OCI-LY7 (cell line): ENCODE measurements at regions of chr2 and their contacts with region 1.

Region 1: DNA sequence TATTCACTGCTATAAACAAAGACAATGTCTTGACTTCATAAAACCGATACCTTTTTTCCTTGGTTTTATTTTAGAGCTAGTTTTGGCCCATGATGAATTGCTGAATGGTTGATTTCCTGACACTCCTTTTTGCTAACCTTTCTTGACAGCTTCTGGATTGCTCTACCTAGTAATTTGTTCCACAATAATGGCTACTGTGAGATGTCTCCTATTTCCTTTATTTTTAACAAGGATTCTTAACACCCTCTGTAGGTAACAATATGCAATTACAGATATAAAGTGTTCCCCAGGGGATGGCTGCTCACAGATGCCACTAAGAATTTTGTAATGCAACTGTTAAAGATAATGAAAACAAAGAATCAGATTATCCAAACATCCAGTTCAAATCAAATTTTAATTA is 100.8 kb upstream of the ATP5MC3 start:
- DNase-seq: peak; percentile 46
- H3K4me3 ChIP-seq: no peak overlapping the region
- H3K27ac ChIP-seq: no peak overlapping the region
- H3K4me1 ChIP-seq: no peaks in the 10 kb centered on the region
- CTCF ChIP-seq: peak; percentile 78

Region 2: GRCh38 chr2:174561283-174561971 is 720.9 kb before region 1 on chr2:
- CTCF ChIA-PET with region 1: no interaction called
- POLR2A ChIA-PET with region 1: no interaction called
- intact Hi-C with region 1: no loop called
- DNase-seq: no peak
- H3K4me3 ChIP-seq: no peak overlapping the region
- H3K27ac ChIP-seq: no peak overlapping the region
- H3K4me1 ChIP-seq: no peaks in the 10 kb centered on the region
- CTCF ChIP-seq: no peak

Region 3: DNA sequence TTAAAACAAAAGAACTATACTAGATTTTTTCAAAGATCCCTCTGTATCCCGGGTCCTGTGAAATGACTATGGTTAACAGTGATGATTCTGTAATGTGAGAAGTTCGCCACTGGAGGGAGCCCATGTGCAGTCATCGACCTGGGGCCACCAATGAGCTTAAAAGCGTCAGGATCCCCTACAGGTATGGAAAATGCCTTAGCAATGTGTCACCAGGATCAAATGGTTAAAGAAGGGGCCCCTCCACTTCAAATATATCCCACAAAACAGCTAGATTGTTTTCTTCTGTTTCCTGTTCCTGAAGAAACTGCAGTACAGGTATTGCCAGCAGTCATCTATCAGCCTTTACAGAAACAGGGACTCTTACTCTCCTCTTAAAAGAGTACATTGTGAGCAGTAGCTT is 533.3 kb before region 1 on chr2:
- CTCF ChIA-PET with region 1: no interaction called
- POLR2A ChIA-PET with region 1: no interaction called
- intact Hi-C with region 1: loop called (anchors 10 kb)
- DNase-seq: peak; percentile 64
- H3K4me3 ChIP-seq: no peak overlapping the region
- H3K27ac ChIP-seq: no peak overlapping the region
- H3K4me1 ChIP-seq: peaks cover 8% of the 10 kb centered on the region
- CTCF ChIP-seq: peak; percentile 92

Region 4: DNA sequence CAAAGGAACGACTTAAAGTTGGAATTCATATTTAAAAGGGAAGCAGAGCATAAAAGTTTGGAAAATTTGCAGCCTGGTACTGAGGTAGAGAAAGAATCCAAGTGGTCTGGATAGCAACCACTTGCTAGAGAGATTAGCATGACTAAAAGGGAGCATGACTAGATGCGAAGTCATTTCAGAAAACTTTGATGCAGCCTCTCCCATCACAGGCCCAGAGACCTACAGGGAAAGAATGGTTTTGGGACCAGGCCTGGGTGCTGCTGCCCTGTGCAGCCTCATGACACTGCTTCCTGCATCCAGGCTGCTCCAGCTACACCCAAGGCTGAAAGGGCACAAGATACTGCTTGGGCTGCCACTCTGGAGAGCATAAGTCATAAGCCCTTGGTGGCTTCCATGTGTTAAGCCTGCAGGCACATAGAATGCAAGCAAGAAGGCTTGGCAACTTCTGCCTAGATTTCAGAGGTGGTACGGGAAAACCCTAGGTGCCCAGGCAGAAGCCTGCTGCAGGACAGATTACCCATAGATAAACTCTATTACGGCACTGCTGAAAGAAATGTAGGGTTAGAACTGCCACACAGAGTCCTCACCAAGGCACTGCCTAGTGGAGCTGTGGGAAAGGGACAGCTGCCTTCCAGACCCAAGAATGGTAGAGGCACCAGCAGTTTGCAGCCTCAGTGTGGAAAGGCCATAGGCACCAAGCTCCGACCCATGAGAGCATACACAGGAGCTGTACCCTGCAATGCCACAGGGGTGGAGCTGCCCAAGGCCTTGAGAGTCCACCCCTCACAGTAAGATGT is 264.5 kb before region 1 on chr2:
- CTCF ChIA-PET with region 1: no interaction called
- POLR2A ChIA-PET with region 1: no interaction called
- intact Hi-C with region 1: no loop called
- DNase-seq: no peak
- H3K4me3 ChIP-seq: no peak overlapping the region
- H3K27ac ChIP-seq: no peak overlapping the region
- H3K4me1 ChIP-seq: no peaks in the 10 kb centered on the region
- CTCF ChIP-seq: no peak

Region 5: DNA sequence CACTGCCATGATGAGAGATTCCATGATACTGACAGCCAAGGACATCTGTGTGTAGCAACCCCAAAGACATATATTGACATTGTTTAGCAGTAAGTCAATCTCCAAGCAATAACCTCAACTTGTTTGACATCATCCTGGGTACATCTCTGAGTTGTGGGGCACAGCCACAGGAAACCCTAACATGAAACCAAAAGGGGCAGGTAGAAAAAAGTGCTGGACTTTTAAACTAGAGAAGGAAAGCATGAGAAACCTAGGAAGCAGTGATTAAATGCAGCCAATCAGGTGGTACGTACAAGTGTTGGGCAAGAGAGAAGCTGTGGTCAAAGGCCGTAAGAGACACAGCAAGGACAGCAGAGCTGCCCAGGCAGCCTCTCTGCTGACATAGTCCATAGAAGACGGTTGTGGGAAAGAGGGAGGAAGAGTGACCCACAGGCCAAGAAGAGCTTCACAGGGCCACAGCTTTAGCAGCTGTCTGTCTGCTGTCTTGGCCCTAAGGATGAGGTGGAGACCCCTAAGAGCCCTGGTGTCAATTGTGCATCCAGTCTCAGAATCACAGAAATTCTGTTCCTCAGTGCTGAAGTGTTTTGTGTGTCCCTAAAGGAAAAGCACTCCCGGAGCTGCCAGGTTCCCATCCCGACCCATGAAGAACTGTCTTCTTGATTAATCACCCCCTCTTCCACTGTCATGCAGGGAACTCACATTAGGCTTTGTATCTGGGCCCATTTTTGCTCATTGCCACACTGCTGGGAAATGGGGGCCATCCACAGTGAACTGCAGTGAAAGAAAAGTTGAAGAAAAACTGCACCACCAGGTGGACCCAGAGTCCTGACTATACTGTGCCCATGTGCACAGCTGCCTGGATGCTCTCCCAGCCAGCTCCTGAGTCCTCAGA is 251.7 kb before region 1 on chr2:
- CTCF ChIA-PET with region 1: no interaction called
- POLR2A ChIA-PET with region 1: no interaction called
- intact Hi-C with region 1: loop called (anchors 10 kb)
- DNase-seq: peak; percentile 35
- H3K4me3 ChIP-seq: no peak overlapping the region
- H3K27ac ChIP-seq: no peak overlapping the region
- H3K4me1 ChIP-seq: no peaks in the 10 kb centered on the region
- CTCF ChIP-seq: peak; percentile 60

Region 6: DNA sequence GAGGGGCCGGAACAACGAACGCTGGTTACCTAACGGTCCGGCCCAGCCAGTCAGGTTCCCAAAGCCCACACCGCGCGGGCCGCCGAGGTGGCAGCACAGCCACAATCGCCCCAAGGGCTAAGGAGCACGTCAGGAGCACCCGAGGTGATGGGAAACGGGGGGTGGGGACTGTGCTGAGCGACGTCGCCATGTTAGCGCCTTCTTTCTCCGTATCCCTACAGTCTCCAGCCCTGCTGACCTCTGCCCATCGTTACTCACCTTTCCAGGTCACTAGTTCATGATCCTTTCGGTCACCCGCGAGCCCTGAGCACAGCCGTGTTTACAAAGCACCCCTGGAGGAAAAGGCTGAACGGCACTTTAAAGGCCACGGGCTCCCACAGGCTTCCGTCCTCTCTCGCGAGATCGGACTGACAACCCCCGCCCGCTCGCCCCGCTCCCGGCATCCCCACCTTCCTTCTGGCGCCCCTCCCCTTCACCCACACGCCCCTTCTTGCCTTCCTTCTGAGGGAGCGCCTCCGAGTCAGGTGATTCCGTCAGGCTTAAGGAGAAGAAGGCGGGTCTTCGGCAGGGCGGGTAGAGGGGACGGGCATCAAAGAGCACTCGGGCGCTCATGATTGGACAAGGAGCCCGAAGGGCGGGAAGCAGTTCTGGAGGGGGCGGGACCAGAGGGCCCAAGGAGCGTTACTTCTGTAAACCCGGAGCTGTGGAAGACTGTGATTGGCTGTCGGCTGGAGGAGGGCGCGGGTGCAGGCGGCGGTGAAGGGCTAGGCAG is 114.3 kb before region 1 on chr2 and contains the start of gene ATF2:
- CTCF ChIA-PET with region 1: no interaction called
- POLR2A ChIA-PET with region 1: no interaction called
- intact Hi-C with region 1: no loop called
- DNase-seq: peak; percentile 99
- H3K4me3 ChIP-seq: peak within 1 kb of the TSS; percentile 99
- H3K27ac ChIP-seq: peak within 1 kb of the TSS; percentile 68
- H3K4me1 ChIP-seq: peaks cover 26% of the 10 kb centered on the region
- CTCF ChIP-seq: no peak
- total RNA-seq, gene ATF2: 22.3 and 22.7 TPM in 2 replicates